ENCODE measurements at regions of chr4 and their contacts with region 1.

Region 1: DNA sequence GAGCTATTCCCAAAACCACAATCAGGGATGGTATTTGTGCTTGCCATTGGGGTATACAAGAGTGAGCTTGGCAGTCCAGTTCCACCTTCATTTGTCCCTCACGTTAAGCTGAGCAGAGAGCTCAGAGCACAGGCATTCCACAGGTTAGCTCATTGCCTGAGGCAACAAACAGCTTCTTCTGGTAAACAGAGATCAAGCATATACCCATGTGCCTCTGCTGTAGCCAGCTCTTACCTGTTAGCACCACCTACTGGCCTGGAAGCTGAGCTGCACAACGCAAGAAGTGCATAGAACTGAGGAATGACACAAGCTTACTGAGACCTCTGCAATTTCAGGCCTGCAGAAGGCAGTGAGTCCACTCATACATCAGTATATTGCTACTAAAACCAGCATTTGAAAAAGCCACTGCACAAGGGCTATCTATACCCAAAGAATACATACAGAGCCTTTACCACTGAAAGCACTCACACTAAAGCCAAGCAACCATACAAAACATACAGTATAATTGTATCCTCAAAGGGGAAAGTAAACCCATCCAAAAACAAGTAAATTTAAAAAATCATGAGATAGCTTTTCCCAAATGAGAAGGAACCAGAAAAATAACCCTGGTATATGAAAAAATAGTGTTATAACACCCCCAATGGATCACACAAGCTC is 258.3 kb upstream of the GABRA2 start:
- DNase-seq: peak; percentile 26
- H3K4me3 ChIP-seq: peak overlapping the region in 1 of 2 experiments; percentile 38; a peak in 1 of 4 replicates
- H3K27ac ChIP-seq: no peak overlapping the region
- H3K4me1 ChIP-seq: no peaks in the 10 kb centered on the region
- H3K27me3 ChIP-seq: no peaks in the 10 kb centered on the region
- CTCF ChIP-seq: peak; percentile 62
- EP300 ChIP-seq: no peak
- RAD21 ChIP-seq: peak; percentile 60

Region 2: GRCh38 chr4:46329118-46329976 is 318.9 kb before region 1 on chr4:
- CTCF ChIA-PET with region 1: interaction called, 18 read pairs
- POLR2A ChIA-PET with region 1: no interaction called
- DNase-seq: peak; percentile 2
- H3K4me3 ChIP-seq: no peak overlapping the region; a peak in 1 of 4 replicates
- H3K27ac ChIP-seq: no peak overlapping the region
- H3K4me1 ChIP-seq: no peaks in the 10 kb centered on the region
- H3K27me3 ChIP-seq: no peaks in the 10 kb centered on the region
- CTCF ChIP-seq: peak; percentile 54
- EP300 ChIP-seq: no peak
- RAD21 ChIP-seq: peak; percentile 61